ENCODE measurements at regions of chr1 and their contacts with region 1.

Region 1: GRCh38 chr1:205284343-205285144 is 37.0 kb downstream of the NUAK2 start:
- DNase-seq: peak; percentile 92
- ATAC-seq: peak; percentile 73
- H3K4me3 Mint-ChIP-seq: peak overlapping the region; percentile 55
- H3K27ac Mint-ChIP-seq: peak overlapping the region; percentile 92
- H3K4me1 Mint-ChIP-seq: peaks cover 82% of the 10 kb centered on the region
- H3K27me3 Mint-ChIP-seq: no peaks in the 10 kb centered on the region

Region 2: DNA sequence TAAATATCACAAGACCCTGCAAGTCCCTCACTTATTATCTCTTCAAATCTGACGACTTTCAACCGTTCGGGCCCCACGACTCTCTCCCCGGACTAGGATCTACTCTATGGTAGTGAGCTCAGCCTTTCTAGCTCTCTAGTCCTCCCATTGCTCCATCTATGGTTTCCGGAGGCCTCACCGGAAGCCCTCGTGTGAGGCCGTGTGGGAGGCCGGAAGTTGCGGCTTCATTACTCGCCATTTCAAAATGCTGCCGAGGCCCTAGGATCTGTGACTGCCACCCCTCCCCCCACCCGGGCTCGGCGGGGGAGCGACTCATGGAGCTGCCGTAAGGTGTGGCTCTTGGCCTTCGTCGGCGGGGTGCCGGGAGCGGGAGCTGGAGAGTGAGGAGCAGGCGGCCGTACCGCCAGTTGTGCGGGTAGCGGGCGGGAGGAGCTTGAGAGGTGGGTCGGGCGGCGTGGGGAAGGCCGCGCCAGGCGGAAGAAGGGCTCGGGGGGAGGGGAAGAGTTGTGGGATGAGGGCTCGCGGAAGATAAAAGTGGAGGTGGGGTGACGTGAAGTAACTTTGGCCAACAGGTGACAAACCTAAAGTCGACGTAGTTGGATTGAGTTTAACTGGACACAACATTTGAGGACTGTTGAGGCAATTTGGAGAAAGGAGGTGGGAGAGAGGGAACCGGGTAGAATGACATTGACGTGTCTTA is 768.2 kb before region 1 on chr1 and contains the start of gene MDM4:
- CTCF ChIA-PET with region 1: no interaction called
- POLR2A ChIA-PET with region 1: no interaction called
- intact Hi-C with region 1: loop called in 1 of 2 experiments (anchors 5 kb)
- DNase-seq: peak; percentile 98
- ATAC-seq: peak; percentile 85
- H3K4me3 Mint-ChIP-seq: no peak within 1 kb of the TSS
- H3K27ac Mint-ChIP-seq: no peak within 1 kb of the TSS
- H3K4me1 Mint-ChIP-seq: peaks cover 62% of the 10 kb centered on the region
- H3K27me3 Mint-ChIP-seq: no peaks in the 10 kb centered on the region
- total RNA-seq, gene MDM4: 89.1 to 94.6 TPM

Region 3: GRCh38 chr1:205273551-205273982 is 11.0 kb before region 1 on chr1:
- CTCF ChIA-PET with region 1: interaction called, 18 read pairs
- POLR2A ChIA-PET with region 1: interaction called, 3 read pairs
- intact Hi-C with region 1: no loop called
- DNase-seq: peak; percentile 92
- ATAC-seq: peak; percentile 90
- H3K4me3 Mint-ChIP-seq: no peak overlapping the region
- H3K27ac Mint-ChIP-seq: no peak overlapping the region
- H3K4me1 Mint-ChIP-seq: peaks cover 35% of the 10 kb centered on the region
- H3K27me3 Mint-ChIP-seq: no peaks in the 10 kb centered on the region

Region 4: DNA sequence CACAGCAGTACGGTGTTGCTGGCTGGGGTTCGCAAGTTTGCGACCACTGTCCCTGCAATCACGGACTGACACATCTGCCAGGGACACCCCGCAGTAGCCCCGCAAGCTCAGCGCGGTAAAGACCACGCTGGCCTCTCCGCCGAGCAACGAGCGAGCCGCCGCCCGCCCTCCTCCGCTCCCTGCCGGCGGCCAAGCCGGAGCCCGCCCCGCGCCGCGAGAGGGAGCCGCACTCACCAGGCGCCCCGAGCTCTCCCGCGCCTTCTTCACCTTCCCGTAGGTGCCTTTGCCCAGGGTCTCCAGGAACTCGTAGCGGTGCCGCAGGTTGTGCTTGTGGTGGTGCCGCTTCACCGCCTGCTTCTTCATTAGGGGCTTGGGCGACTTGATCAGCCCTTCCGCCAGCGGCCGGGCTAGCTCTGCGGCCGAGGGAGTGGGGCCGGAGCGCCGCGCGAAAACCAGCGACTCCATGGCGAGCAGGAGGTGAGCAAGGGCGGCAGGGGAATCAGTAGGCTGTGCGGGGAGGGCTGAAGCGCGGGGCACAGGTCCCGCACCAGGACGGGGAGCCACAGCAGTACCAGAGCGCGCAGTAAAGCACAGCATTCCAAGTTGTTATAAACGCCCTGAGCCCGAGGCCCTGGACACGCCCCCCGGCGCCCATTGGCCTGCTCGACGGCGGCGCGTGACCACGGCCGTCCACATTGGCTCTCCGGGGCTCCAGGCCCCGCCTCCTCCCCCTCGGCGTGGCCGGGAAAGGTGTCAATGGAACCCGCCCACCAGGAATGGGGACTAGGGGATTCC is 36.8 kb after region 1 on chr1 and contains the start of gene NUAK2:
- CTCF ChIA-PET with region 1: interaction called, 760 read pairs
- POLR2A ChIA-PET with region 1: interaction called, 9 read pairs
- intact Hi-C with region 1: loop called (anchors 1 kb)
- DNase-seq: peak; percentile 90
- ATAC-seq: peak; percentile 85
- H3K4me3 Mint-ChIP-seq: peak within 1 kb of the TSS; percentile 88
- H3K27ac Mint-ChIP-seq: peak within 1 kb of the TSS; percentile 90
- H3K4me1 Mint-ChIP-seq: peaks cover 65% of the 10 kb centered on the region
- H3K27me3 Mint-ChIP-seq: no peaks in the 10 kb centered on the region
- total RNA-seq, gene NUAK2: 2.3 to 2.7 TPM

Region 5: GRCh38 chr1:205711104-205712020 is 426.8 kb after region 1 on chr1:
- CTCF ChIA-PET with region 1: no interaction called
- POLR2A ChIA-PET with region 1: no interaction called
- intact Hi-C with region 1: no loop called
- DNase-seq: peak; percentile 78
- ATAC-seq: peak; percentile 90
- H3K4me3 Mint-ChIP-seq: no peak overlapping the region
- H3K27ac Mint-ChIP-seq: peak overlapping the region; percentile 43
- H3K4me1 Mint-ChIP-seq: peaks cover 13% of the 10 kb centered on the region
- H3K27me3 Mint-ChIP-seq: no peaks in the 10 kb centered on the region

Region 6: GRCh38 chr1:205812878-205813754 is 528.6 kb after region 1 on chr1 and contains the start of gene SLC41A1:
- CTCF ChIA-PET with region 1: no interaction called
- POLR2A ChIA-PET with region 1: no interaction called
- intact Hi-C with region 1: loop called in 1 of 2 experiments (anchors 5 kb)
- DNase-seq: peak; percentile 94
- ATAC-seq: peak; percentile 96
- H3K4me3 Mint-ChIP-seq: peak within 1 kb of the TSS; percentile 81
- H3K27ac Mint-ChIP-seq: peak within 1 kb of the TSS; percentile 84
- H3K4me1 Mint-ChIP-seq: peaks cover 47% of the 10 kb centered on the region
- H3K27me3 Mint-ChIP-seq: no peaks in the 10 kb centered on the region
- total RNA-seq, gene SLC41A1: 34.4 to 41.5 TPM

Measured in activated CD4-positive, alpha-beta T cell treated with anti-CD3 and anti-CD28 coated beads for 36 hours (primary cell).